Uterus (tissue), 4 donors: ENCODE measurements at regions of chr9 and their contacts with region 1.

Region 1: GRCh38 chr9:83937911-83938323 is 16.7 kb upstream of the KIF27 start:
- DNase-seq: no peak
- H3K4me3 ChIP-seq: no peak overlapping the region
- H3K27ac ChIP-seq: no peak overlapping the region
- H3K4me1 ChIP-seq: no peaks in the 10 kb centered on the region
- H3K27me3 ChIP-seq: no peaks in the 10 kb centered on the region
- CTCF ChIP-seq: peak; percentile 49 to 78 (median 72)
- POLR2A ChIP-seq: no peak

Region 2: GRCh38 chr9:83622939-83623678 is 314.8 kb before region 1 on chr9 and contains the start of gene IDNK:
- intact Hi-C with region 1: no loop called
- DNase-seq: peak; percentile 40 to 45
- H3K4me3 ChIP-seq: peak within 1 kb of the TSS; percentile 54 to 78
- H3K27ac ChIP-seq: peak within 1 kb of the TSS; percentile 86 to 87
- H3K4me1 ChIP-seq: no peaks in the 10 kb centered on the region
- H3K27me3 ChIP-seq: no peaks in the 10 kb centered on the region
- CTCF ChIP-seq: peak in 1 of 4 experiments; percentile 3
- POLR2A ChIP-seq: peak in 1 of 2 donors; percentile 6
- total RNA-seq, gene IDNK: 2.6 to 5.5 (median 4.0) TPM in 3 of 4 donors, not detected in the other

Region 3: DNA sequence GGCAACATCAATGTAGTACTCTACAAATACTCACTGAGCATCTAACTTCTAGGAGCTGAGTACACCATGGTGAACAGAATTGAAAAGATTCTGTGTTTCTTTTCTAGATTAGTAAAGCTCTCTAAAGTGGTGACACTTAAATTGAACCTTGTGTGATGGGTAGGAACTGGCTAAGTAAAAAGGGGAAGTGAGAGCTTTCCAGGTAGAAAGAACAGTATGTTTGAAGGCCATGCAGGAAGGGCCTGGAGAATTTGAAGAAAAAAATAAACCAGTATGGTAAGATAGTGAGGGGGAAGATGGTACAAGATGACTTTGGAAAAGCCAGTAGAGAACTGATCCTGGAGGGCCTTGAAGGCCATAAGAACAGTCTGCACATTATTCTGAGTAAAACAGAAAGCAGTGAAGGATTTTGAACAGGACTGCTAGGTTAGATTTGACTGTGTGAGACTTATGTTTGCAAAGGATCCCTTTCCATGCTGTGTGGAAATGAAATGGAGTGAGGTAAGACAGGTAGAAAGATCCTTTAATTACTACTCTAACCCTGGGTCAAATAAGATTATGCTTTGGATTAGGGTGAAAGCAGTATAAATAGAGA is 183.4 kb before region 1 on chr9:
- intact Hi-C with region 1: no loop called
- DNase-seq: no peak
- H3K4me3 ChIP-seq: no peak overlapping the region
- H3K27ac ChIP-seq: no peak overlapping the region
- H3K4me1 ChIP-seq: no peaks in the 10 kb centered on the region
- H3K27me3 ChIP-seq: no peaks in the 10 kb centered on the region
- CTCF ChIP-seq: no peak
- POLR2A ChIP-seq: no peak

Region 4: DNA sequence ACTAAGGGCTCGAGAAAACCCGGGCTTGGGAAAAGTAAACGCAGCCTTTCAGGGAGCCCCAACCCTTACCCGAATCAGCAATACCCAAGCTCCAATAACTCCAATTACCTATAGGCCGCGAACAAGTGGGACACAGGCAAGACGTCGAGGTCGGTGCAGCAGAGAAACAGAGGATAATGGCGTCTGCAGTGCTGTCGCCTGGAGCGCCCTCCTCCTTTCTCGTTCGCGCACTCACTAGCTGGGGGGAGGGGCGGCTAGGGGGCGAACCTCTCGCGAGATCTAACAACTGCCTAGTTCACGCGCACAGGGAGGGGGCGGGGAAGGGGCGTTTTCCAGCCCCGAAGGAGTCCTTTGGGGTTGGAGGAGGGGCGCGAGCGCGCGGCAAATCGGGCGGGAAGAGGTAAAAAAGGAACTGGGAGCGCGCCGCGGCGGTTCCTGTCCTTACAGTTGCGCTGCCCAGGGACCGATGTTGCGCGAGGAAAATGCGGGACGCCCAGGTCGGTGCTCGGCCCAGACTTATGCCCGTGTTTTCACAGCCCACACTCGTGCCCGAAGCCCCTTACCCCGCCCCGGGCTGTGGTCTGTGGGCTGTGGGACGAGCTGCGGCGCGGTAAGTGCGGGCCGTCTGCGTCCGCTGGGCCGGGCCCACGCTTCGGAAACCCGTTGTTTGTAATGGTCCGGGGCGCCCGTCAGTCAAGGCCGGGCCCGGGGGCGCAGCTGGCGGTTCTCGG is 42.6 kb after region 1 on chr9 and contains the start of gene RMI1:
- intact Hi-C with region 1: loop called (anchors 10 kb)
- DNase-seq: peak; percentile 99
- H3K4me3 ChIP-seq: peak within 1 kb of the TSS; percentile 81 to 93
- H3K27ac ChIP-seq: peak within 1 kb of the TSS; percentile 98 to 100
- H3K4me1 ChIP-seq: peaks cover 7 to 16% of the 10 kb centered on the region in 2 donors
- H3K27me3 ChIP-seq: no peaks in the 10 kb centered on the region
- CTCF ChIP-seq: peak in 2 of 4 experiments; percentile 2 to 12
- POLR2A ChIP-seq: peak; percentile 92 to 96
- total RNA-seq, gene RMI1: 1.0 to 16.5 (median 6.7) TPM

Region 5: GRCh38 chr9:84261082-84261746 is 323.3 kb after region 1 on chr9:
- intact Hi-C with region 1: loop called (anchors 5 kb)
- DNase-seq: peak; percentile 56 to 71
- H3K4me3 ChIP-seq: peak overlapping the region in 1 of 2 donors; percentile 9
- H3K27ac ChIP-seq: no peak overlapping the region
- H3K4me1 ChIP-seq: no peaks in the 10 kb centered on the region
- H3K27me3 ChIP-seq: no peaks in the 10 kb centered on the region
- CTCF ChIP-seq: peak; percentile 79 to 90 (median 81)
- POLR2A ChIP-seq: no peak